ENCODE measurements at regions of chr16 and their contacts with region 1.

Region 1: GRCh38 chr16:66406534-66407221 is 20.4 kb upstream of the BEAN1 start:
- DNase-seq: peak; percentile 91
- ATAC-seq: peak; percentile 84

Region 2: DNA sequence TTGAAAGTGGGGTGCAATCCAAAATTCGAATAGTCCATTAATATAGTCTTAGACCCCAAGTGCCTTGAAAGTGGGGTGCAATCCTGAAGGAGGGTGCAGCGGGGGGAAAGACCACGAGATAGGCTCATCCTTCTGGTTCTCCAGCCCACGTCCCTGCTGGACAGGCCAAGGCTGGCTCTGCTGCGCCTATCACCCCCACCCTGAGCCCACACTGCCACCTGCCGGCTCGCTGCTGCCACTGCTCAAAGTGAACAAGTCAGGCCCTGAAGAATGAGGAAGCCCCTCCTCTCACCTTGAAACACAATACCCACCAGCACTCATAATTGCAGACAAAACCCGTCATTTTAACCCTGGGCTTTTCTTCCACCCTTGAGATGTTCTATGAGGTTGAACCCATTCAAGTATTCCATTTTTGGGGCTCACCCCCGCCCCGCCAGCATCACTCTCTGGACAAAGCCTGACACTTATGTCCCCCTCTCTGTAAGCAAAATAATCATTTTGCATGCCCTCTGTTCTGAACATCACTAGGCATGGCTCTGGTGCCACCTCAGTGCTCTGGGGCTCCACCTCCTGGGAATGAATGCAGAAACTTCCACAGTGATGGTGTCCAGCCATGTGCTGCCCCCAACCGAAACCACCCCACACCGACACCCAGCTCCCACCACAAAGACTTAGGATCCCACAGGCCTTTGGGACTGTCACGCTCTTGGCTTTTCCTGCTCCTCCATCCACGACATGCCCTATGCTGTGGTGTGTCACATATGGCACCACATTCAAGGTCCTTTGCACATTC is 77.2 kb after region 1 on chr16:
- intact Hi-C with region 1: loop called (anchors 5 kb)
- DNase-seq: peak; percentile 88
- ATAC-seq: peak; percentile 77

Region 3: DNA sequence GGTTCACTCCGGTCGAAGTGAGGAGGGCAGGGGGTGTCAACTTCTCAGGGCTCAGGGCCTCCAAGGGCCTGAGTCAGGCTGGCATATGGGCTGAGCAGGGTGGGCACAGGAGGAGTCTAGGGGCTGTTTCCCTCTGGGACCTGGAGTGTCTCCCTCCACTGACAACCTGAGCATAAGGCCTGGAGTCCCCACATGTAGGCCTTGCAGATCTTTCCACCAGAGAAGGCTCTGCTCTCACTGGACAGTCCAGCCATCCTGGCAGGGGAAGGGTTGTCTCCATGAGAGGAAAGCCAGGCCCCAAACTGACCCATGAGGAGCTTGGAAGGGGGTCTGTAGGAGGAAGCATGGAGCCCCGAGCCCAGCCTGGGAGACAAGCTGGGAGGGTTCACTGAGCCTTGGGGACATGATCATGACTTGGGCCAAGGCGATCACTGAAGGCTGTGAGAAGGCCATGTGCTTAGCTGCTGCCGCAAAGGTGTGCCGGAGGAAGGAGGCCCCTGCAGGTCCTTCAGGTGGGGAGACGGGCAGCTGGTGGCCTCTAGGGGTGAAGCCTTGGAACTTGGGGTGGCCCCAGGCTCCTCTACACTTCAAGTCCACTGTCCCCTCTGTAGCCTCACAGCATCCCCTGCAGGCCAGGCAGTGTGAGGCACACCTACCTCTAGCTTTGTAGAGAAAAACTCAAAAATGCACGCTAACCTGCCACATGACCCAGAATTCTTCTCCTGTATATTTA is 182.5 kb after region 1 on chr16:
- intact Hi-C with region 1: loop called (anchors 10 kb)
- DNase-seq: peak; percentile 57
- ATAC-seq: peak; percentile 78